Naive thymus-derived CD4-positive, alpha-beta T cell (primary cell): ENCODE measurements at regions of chr1 and their contacts with region 1.

Region 1: DNA sequence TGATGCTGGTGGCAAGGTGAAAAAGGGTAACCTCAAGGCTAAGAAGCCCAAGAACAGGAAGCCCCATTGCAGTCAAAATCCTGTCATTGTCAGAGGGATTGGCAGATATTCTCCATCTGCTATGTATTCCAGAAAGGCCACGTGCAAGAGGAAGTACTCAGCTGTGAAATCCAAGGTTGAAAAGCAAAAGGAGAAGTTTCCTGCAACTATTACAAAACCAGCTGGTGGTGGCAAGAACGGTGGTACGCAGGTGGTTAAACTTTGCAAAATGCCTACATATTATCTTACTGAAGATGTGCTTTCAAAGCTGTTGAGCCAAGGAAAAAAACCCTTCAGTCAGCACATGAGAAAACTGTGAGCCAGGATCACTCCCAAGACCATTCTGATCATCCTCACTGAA is 13.7 kb upstream of the VPS45 start:
- DNase-seq: no peak
- ATAC-seq: no peak
- H3K4me3 ChIP-seq: no peak overlapping the region
- H3K4me3 Mint-ChIP-seq: no peak overlapping the region
- H3K27ac ChIP-seq: no peak overlapping the region
- H3K27ac Mint-ChIP-seq: no peak overlapping the region
- H3K4me1 ChIP-seq: peaks cover 0 to 6% of the 10 kb centered on the region in 2 donors
- H3K4me1 Mint-ChIP-seq: peaks cover 0 to 5% (median 2%) of the 10 kb centered on the region in 7 donors
- H3K27me3 ChIP-seq: no peaks in the 10 kb centered on the region
- H3K27me3 Mint-ChIP-seq: peaks cover 0 to 34% (median 0%) of the 10 kb centered on the region in 5 donors

Region 2: GRCh38 chr1:149917571-149918144 is 136.3 kb before region 1 on chr1 and contains the start of gene SV2A:
- CTCF ChIA-PET with region 1: no interaction called
- POLR2A ChIA-PET with region 1: no interaction called
- intact Hi-C with region 1: loop called in 1 of 2 experiments (anchors 5 kb)
- DNase-seq: peak in 8 of 9 donors; percentile 5 to 57 (median 20)
- ATAC-seq: peak; percentile 80
- H3K4me3 ChIP-seq: peak within 1 kb of the TSS; percentile 81
- H3K4me3 Mint-ChIP-seq: peak within 1 kb of the TSS; percentile 68 to 97 (median 88)
- H3K27ac ChIP-seq: peak within 1 kb of the TSS; percentile 36
- H3K27ac Mint-ChIP-seq: peak within 1 kb of the TSS in 8 of 9 donors; percentile 26 to 91 (median 70)
- H3K4me1 ChIP-seq: peaks cover 7 to 33% of the 10 kb centered on the region in 2 donors
- H3K4me1 Mint-ChIP-seq: peaks cover 22 to 57% (median 47%) of the 10 kb centered on the region in 7 donors
- H3K27me3 ChIP-seq: no peaks in the 10 kb centered on the region
- H3K27me3 Mint-ChIP-seq: no peaks in the 10 kb centered on the region
- total RNA-seq, gene SV2A: 2.6 to 18.8 (median 3.1) TPM

Region 3: DNA sequence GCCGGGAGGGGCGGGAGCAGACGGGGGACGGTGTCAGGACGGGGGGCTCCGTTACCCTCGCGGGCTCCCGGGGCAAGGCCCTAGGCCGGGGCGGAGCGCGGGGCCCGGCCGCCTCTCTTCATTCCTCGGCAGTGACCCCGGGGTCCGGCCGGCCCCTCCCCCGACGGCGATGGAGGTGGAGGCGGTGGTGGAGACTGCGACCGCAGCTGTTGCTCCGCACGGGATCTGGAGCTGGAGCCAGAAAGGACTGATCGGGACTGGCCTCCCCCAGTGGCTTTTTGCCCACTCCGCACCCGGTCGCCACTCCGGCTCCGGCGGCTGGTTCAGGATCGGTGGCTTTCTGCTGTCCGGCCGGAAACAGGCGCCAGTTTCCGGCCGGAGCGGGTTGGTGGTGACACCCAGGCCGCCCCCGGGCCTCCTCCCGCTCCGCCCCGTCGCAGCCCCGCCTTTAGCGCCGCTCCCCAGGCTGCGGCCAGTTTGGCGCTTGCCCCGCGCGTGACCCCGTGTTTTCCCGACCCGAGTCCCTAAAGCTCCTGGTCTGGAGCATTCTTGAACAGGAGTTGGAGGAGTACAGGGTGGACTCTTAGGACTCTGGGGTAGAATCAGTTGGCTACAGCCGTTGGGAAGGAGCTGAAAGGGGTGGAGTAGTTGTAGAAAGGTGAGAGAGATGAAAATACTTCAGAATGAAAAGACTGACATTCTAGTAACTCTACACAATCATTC is 43.4 kb before region 1 on chr1 and contains the start of gene OTUD7B:
- CTCF ChIA-PET with region 1: no interaction called
- POLR2A ChIA-PET with region 1: interaction called, 4 read pairs
- intact Hi-C with region 1: loop called in 1 of 2 experiments (anchors 2 kb)
- DNase-seq: peak; percentile 5 to 85 (median 46)
- ATAC-seq: peak; percentile 92
- H3K4me3 ChIP-seq: peak within 1 kb of the TSS; percentile 89
- H3K4me3 Mint-ChIP-seq: peak within 1 kb of the TSS; percentile 88 to 99 (median 96)
- H3K27ac ChIP-seq: peak within 1 kb of the TSS; percentile 73
- H3K27ac Mint-ChIP-seq: peak within 1 kb of the TSS; percentile 85 to 93 (median 87)
- H3K4me1 ChIP-seq: peaks cover 8 to 12% of the 10 kb centered on the region in 2 donors
- H3K4me1 Mint-ChIP-seq: peaks cover 21 to 38% (median 31%) of the 10 kb centered on the region in 7 donors
- H3K27me3 ChIP-seq: no peaks in the 10 kb centered on the region
- H3K27me3 Mint-ChIP-seq: peaks cover 0 to 12% (median 0%) of the 10 kb centered on the region in 5 donors
- total RNA-seq, gene OTUD7B: 4.6 to 12.8 (median 9.7) TPM

Region 4: GRCh38 chr1:150034336-150034735 is 19.6 kb before region 1 on chr1:
- CTCF ChIA-PET with region 1: no interaction called
- POLR2A ChIA-PET with region 1: no interaction called
- intact Hi-C with region 1: no loop called
- DNase-seq: no peak
- ATAC-seq: no peak
- H3K4me3 ChIP-seq: no peak overlapping the region
- H3K4me3 Mint-ChIP-seq: no peak overlapping the region
- H3K27ac ChIP-seq: no peak overlapping the region
- H3K27ac Mint-ChIP-seq: no peak overlapping the region
- H3K4me1 ChIP-seq: no peaks in the 10 kb centered on the region
- H3K4me1 Mint-ChIP-seq: no peaks in the 10 kb centered on the region
- H3K27me3 ChIP-seq: no peaks in the 10 kb centered on the region
- H3K27me3 Mint-ChIP-seq: peaks cover 0 to 20% (median 0%) of the 10 kb centered on the region in 5 donors